ENCODE measurements at regions of chr6 and their contacts with region 1.

Region 1: GRCh38 chr6:155327326-155328073 is 13.2 kb upstream of the TFB1M start:
- DNase-seq: peak; percentile 82
- ATAC-seq: peak; percentile 63
- H3K4me3 Mint-ChIP-seq: no peak overlapping the region
- H3K27ac Mint-ChIP-seq: peak overlapping the region; percentile 86
- H3K4me1 Mint-ChIP-seq: peaks cover 27% of the 10 kb centered on the region
- H3K27me3 Mint-ChIP-seq: no peaks in the 10 kb centered on the region

Region 2: DNA sequence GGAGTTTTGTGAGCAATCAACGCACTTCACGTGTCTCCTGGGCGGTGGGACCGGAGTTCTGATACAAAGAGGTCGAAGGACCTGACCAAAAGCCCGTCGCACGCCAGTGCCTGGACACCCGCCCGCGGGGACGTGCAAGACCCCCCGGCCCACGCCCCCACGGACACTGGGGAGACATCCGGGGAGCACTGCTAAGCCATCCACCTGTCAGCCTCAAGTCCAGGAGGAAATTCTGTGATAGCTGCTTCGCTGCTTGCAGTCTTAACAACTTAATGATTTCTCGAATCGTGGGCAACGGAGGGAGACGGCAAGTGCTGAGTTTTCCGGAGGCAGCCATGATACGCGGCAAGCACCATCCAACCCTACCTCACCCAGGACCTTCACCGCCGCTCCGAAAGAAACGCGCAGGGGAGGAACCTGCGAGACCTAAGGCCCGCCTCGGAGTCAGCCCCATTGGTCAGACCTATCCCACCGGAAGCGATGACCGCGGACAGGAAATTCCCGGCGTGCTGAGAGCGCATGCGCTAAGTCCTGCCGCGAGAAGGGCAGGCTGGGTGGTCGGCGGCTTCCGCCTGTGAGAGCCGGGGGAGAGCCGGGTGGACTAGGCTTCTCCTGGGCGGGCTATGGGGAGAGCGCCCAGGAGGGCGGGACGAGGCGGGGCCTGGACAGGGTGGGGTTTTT is 13.3 kb before region 1 on chr6 and contains the start of gene TFB1M:
- CTCF ChIA-PET with region 1: interaction called, 21 read pairs
- POLR2A ChIA-PET with region 1: no interaction called
- intact Hi-C with region 1: no loop called
- DNase-seq: peak; percentile 99
- ATAC-seq: peak; percentile 95
- H3K4me3 Mint-ChIP-seq: peak within 1 kb of the TSS; percentile 90
- H3K27ac Mint-ChIP-seq: peak within 1 kb of the TSS; percentile 98
- H3K4me1 Mint-ChIP-seq: peaks cover 39% of the 10 kb centered on the region
- H3K27me3 Mint-ChIP-seq: no peaks in the 10 kb centered on the region
- total RNA-seq, gene TFB1M: 45.5 to 56.4 TPM

Region 3: GRCh38 chr6:155530219-155530834 is 202.8 kb after region 1 on chr6:
- CTCF ChIA-PET with region 1: interaction called, 22 read pairs
- POLR2A ChIA-PET with region 1: no interaction called
- intact Hi-C with region 1: loop called (anchors 1 kb)
- DNase-seq: peak; percentile 29
- ATAC-seq: peak; percentile 73
- H3K4me3 Mint-ChIP-seq: no peak overlapping the region
- H3K27ac Mint-ChIP-seq: no peak overlapping the region
- H3K4me1 Mint-ChIP-seq: peaks cover 16% of the 10 kb centered on the region
- H3K27me3 Mint-ChIP-seq: no peaks in the 10 kb centered on the region

Region 4: GRCh38 chr6:156167625-156168071 is 840.1 kb after region 1 on chr6:
- CTCF ChIA-PET with region 1: no interaction called
- POLR2A ChIA-PET with region 1: no interaction called
- intact Hi-C with region 1: loop called in 1 of 2 experiments (anchors 10 kb)
- DNase-seq: no peak
- ATAC-seq: peak; percentile 47
- H3K4me3 Mint-ChIP-seq: peak overlapping the region; percentile 60
- H3K27ac Mint-ChIP-seq: peak overlapping the region; percentile 88
- H3K4me1 Mint-ChIP-seq: peaks cover 57% of the 10 kb centered on the region
- H3K27me3 Mint-ChIP-seq: no peaks in the 10 kb centered on the region

Region 5: GRCh38 chr6:156396068-156396771 is 1068.7 kb after region 1 on chr6:
- CTCF ChIA-PET with region 1: no interaction called
- POLR2A ChIA-PET with region 1: no interaction called
- intact Hi-C with region 1: loop called in 1 of 2 experiments (anchors 10 kb)
- DNase-seq: peak; percentile 46
- ATAC-seq: peak; percentile 66
- H3K4me3 Mint-ChIP-seq: peak overlapping the region; percentile 45
- H3K27ac Mint-ChIP-seq: peak overlapping the region; percentile 72
- H3K4me1 Mint-ChIP-seq: peaks cover 77% of the 10 kb centered on the region
- H3K27me3 Mint-ChIP-seq: peaks cover 4% of the 10 kb centered on the region

Measured in activated CD4-positive, alpha-beta T cell treated with anti-CD3 and anti-CD28 coated beads for 36 hours (primary cell).